Dendritic cell treated with granulocyte-macrophage colony-stimulating factor and Interleukin-4, amounts not matched to agents 40 ng/mL and 50 ng/mL, for 4 days (primary cell): ENCODE measurements at regions of chr9 and their contacts with region 1.

Region 1: GRCh38 chr9:72443855-72444254 is 77.6 kb upstream of the TMC1 start:
- H3K4me3 Mint-ChIP-seq: no peak overlapping the region
- H3K27ac Mint-ChIP-seq: peak overlapping the region; percentile 61
- H3K4me1 Mint-ChIP-seq: peaks cover 69% of the 10 kb centered on the region
- H3K27me3 Mint-ChIP-seq: no peaks in the 10 kb centered on the region

Region 2: DNA sequence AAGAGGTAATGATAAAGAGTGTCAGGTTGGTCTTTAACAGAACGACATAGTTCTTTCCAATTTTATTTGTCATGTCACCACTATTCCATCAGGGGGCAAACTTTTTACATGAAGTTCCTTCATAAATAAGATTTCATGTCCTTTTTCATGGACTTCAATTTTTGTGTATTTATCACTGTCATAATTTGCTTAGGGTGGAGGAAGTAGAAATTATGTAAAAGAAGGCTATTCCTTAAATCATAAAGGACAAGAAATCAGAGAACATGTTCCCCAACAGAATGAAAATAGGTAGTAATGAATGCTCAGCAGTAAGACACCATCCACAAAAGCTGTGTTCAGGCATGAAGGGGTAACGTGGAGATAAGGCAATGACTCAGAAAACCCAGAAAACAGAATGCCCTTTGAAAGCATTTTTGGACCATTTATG is 151.6 kb before region 1 on chr9:
- intact Hi-C with region 1: loop called (anchors 2 kb)
- H3K4me3 Mint-ChIP-seq: peak overlapping the region; percentile 5
- H3K27ac Mint-ChIP-seq: peak overlapping the region; percentile 98
- H3K4me1 Mint-ChIP-seq: peaks cover 57% of the 10 kb centered on the region
- H3K27me3 Mint-ChIP-seq: no peaks in the 10 kb centered on the region

Region 3: GRCh38 chr9:72424131-72424530 is 19.7 kb before region 1 on chr9:
- intact Hi-C with region 1: loop called (anchors 2 kb)
- H3K4me3 Mint-ChIP-seq: no peak overlapping the region
- H3K27ac Mint-ChIP-seq: peak overlapping the region; percentile 94
- H3K4me1 Mint-ChIP-seq: peaks cover 66% of the 10 kb centered on the region
- H3K27me3 Mint-ChIP-seq: no peaks in the 10 kb centered on the region

Region 4: GRCh38 chr9:72526901-72527800 is 83.3 kb after region 1 on chr9:
- intact Hi-C with region 1: loop called (anchors 5 kb)
- H3K4me3 Mint-ChIP-seq: peak overlapping the region; percentile 77
- H3K27ac Mint-ChIP-seq: peak overlapping the region; percentile 99
- H3K4me1 Mint-ChIP-seq: peaks cover 53% of the 10 kb centered on the region
- H3K27me3 Mint-ChIP-seq: no peaks in the 10 kb centered on the region

Region 5: DNA sequence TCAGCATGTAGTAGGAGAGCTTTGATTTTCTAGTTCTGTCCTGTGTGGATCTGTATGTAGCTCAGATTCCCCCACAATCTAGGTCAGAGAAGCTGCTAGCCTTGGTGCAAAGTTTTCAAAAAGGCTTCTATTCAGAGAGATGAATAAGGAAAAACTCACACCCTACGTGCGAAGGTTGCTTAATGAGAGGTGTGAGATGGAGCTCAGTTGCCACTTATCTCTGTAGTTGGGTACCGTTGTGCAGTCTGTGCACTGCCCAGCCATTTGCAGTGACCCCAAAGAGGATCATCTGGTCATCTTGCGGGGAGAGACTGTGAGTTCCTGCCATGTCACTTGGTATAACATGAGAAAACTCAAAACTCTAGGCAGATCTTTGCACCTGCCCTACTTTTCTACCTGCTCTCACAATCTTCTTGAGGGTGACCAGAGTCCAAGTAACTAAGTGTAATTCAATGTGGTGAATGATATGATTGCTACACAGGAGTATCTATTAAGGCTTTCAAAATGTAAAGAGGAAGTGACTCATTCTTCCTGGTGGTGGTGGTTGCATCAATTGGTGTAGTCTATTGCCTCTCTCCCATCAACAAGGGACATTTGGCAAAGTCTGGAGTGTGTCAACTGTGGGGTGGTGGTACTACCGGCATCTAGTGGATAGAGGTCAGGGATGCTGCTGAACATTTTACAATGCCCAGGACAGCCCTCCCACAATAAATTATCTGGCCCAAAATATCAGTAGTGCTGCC is 142.7 kb after region 1 on chr9:
- intact Hi-C with region 1: loop called (anchors 2 kb)
- H3K4me3 Mint-ChIP-seq: no peak overlapping the region
- H3K27ac Mint-ChIP-seq: no peak overlapping the region
- H3K4me1 Mint-ChIP-seq: peaks cover 55% of the 10 kb centered on the region
- H3K27me3 Mint-ChIP-seq: no peaks in the 10 kb centered on the region